ENCODE measurements at regions of chr16 and their contacts with region 1.

Region 1: GRCh38 chr16:12095275-12096156 is 119.0 kb downstream of the SNX29 start:
- DNase-seq: peak; percentile 55 to 81 (median 68)
- H3K4me3 ChIP-seq: peak overlapping the region in 52 of 59 donors; percentile 1 to 60 (median 38)
- H3K27ac ChIP-seq: peak overlapping the region in 50 of 59 donors; percentile 14 to 87 (median 68)
- H3K27me3 ChIP-seq: no peaks in the 10 kb centered on the region
- CTCF ChIP-seq: peak; percentile 87 to 99 (median 95)

Region 2: GRCh38 chr16:12228602-12229499 is 133.3 kb after region 1 on chr16:
- intact Hi-C with region 1: loop called in 1 of 2 experiments (anchors 10 kb)
- DNase-seq: peak; percentile 23 to 78 (median 74)
- H3K4me3 ChIP-seq: no peak overlapping the region
- H3K27ac ChIP-seq: no peak overlapping the region
- H3K27me3 ChIP-seq: no peaks in the 10 kb centered on the region
- CTCF ChIP-seq: peak in 55 of 56 donors; percentile 16 to 84 (median 72)

Region 3: GRCh38 chr16:12271006-12271405 is 175.5 kb after region 1 on chr16:
- intact Hi-C with region 1: loop called (anchors 5 kb)
- DNase-seq: peak in 7 of 10 donors; percentile 14 to 67 (median 39)
- H3K4me3 ChIP-seq: no peak overlapping the region
- H3K27ac ChIP-seq: no peak overlapping the region
- H3K27me3 ChIP-seq: no peaks in the 10 kb centered on the region
- CTCF ChIP-seq: peak in 53 of 56 donors; percentile 14 to 80 (median 58)

Region 4: DNA sequence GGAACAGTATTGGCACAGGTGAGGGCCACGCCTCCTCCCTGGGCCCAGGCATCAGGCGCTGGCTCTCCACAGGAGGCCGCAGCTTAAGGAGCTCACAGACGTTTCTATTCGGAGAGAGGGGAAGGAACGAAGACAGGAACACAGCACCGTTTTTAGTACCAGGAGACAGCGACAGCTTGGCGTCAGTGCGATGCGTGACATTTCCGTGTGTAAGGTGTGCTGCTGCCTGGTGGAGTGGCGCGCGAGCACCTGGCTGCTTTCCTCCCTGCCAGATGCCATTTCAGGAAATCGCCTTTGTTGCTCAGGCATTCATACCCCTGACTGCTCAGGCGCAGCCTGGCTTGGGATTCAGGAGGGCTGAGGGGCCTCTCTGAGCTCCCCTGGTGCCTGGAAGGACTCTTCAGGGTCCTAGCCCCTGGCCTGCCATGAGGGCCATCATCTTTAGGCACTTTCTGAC is 340.7 kb after region 1 on chr16:
- intact Hi-C with region 1: loop called in 1 of 2 experiments (anchors 10 kb)
- DNase-seq: peak in 1 of 10 donors; percentile 72
- H3K4me3 ChIP-seq: no peak overlapping the region
- H3K27ac ChIP-seq: peak overlapping the region in 25 of 59 donors; percentile 8 to 69 (median 31)
- H3K27me3 ChIP-seq: no peaks in the 10 kb centered on the region
- CTCF ChIP-seq: no peak

Region 5: GRCh38 chr16:12455287-12455798 is 359.8 kb after region 1 on chr16:
- intact Hi-C with region 1: loop called in 1 of 2 experiments (anchors 10 kb)
- DNase-seq: peak; percentile 14 to 82 (median 67)
- H3K4me3 ChIP-seq: no peak overlapping the region
- H3K27ac ChIP-seq: peak overlapping the region in 1 of 59 donors; percentile 21
- H3K27me3 ChIP-seq: no peaks in the 10 kb centered on the region
- CTCF ChIP-seq: peak; percentile 50 to 95 (median 84)

Region 6: GRCh38 chr16:12819126-12820117 is 723.9 kb after region 1 on chr16:
- intact Hi-C with region 1: loop called in 1 of 2 experiments (anchors 10 kb)
- DNase-seq: peak in 5 of 10 donors; percentile 27 to 65 (median 52)
- H3K4me3 ChIP-seq: no peak overlapping the region
- H3K27ac ChIP-seq: no peak overlapping the region
- H3K27me3 ChIP-seq: no peaks in the 10 kb centered on the region
- CTCF ChIP-seq: peak; percentile 20 to 85 (median 71)

Region 7: DNA sequence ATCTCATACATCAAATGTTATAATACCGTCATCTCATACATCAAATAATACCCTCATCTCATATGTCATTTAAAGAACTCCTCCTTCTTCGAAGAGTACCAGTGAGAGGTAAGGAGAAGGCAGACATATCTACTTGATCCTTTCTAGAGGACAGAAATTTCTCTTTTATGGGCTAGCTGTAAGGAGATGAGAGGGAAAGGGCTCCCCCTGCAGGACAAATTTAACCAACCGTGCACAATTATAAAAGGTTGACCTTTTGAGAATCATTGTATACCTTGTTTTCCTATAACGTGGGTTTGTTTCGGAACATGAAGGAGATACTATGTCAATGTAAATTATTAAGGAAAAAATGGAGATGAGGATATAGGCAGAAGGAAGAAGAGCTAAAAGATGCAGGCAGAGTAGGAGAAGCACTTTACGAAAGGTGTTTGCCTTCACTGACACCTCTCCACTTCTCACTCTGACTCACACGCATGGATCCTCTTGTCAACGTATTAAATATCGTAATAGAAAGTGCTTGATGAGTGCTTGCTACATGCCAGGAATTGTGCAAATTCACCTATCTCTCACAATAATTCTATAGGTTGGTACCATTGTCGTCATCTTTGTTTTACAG is 1358.5 kb after region 1 on chr16:
- intact Hi-C with region 1: loop called in 1 of 2 experiments (anchors 10 kb)
- DNase-seq: peak in 3 of 10 donors; percentile 29 to 66 (median 48)
- H3K4me3 ChIP-seq: no peak overlapping the region
- H3K27ac ChIP-seq: no peak overlapping the region
- H3K27me3 ChIP-seq: peaks cover 0 to 5% (median 0%) of the 10 kb centered on the region in 45 donors
- CTCF ChIP-seq: peak; percentile 47 to 86 (median 66)

Measured in dorsolateral prefrontal cortex (tissue), 120 donors.